ENCODE measurements at regions of chr19 and their contacts with region 1.

Region 1: DNA sequence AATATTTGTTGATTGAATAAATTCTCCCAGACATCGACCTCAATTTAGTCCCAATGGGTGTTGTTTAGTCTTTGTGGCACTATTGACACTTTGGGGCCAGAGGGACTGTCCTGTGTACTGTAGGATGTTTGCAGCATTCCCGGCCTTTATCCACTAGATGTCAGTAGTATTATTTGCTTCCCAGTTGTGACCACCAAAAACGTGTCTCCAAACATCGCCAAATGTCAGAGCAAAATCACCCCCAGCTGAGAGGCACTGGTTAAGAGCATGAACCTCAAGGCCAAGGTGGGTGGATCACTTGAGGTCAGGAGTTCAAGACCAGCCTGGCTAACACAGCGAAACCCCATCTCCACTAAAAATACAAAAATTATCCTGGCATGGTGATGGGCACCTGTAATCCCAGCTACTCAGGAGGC is 15.4 kb downstream of the NLRP12 start:
- DNase-seq: peak; percentile 47
- H3K4me3 ChIP-seq: no peak overlapping the region
- H3K27ac ChIP-seq: no peak overlapping the region
- H3K4me1 ChIP-seq: peaks cover 10% of the 10 kb centered on the region
- H3K27me3 ChIP-seq: no peaks in the 10 kb centered on the region
- CTCF ChIP-seq: peak; percentile 51 to 59
- POLR2A ChIP-seq: no peak

Region 2: GRCh38 chr19:53945441-53945840 is 136.7 kb after region 1 on chr19:
- CTCF ChIA-PET with region 1: interaction called, 11 read pairs
- POLR2A ChIA-PET with region 1: no interaction called
- dilution Hi-C with region 1: no loop called
- intact Hi-C with region 1: no loop called
- DNase-seq: no peak
- H3K4me3 ChIP-seq: no peak overlapping the region
- H3K27ac ChIP-seq: no peak overlapping the region
- H3K4me1 ChIP-seq: no peaks in the 10 kb centered on the region
- H3K27me3 ChIP-seq: peaks cover 11 to 30% of the 10 kb centered on the region in 2 experiments
- CTCF ChIP-seq: no peak
- POLR2A ChIP-seq: no peak

Region 3: GRCh38 chr19:54035215-54036178 is 226.8 kb after region 1 on chr19:
- CTCF ChIA-PET with region 1: interaction called, 210 read pairs
- POLR2A ChIA-PET with region 1: no interaction called
- dilution Hi-C with region 1: no loop called
- intact Hi-C with region 1: loop called (anchors 1 kb)
- DNase-seq: peak; percentile 86
- H3K4me3 ChIP-seq: no peak overlapping the region
- H3K27ac ChIP-seq: peak overlapping the region; percentile 68
- H3K4me1 ChIP-seq: peaks cover 16% of the 10 kb centered on the region
- H3K27me3 ChIP-seq: no peaks in the 10 kb centered on the region
- CTCF ChIP-seq: no peak
- POLR2A ChIP-seq: no peak

Region 4: GRCh38 chr19:54096617-54097129 is 288.0 kb after region 1 on chr19:
- CTCF ChIA-PET with region 1: interaction called, 9 read pairs
- POLR2A ChIA-PET with region 1: no interaction called
- dilution Hi-C with region 1: no loop called
- intact Hi-C with region 1: loop called (anchors 1 kb)
- DNase-seq: no peak
- H3K4me3 ChIP-seq: no peak overlapping the region
- H3K27ac ChIP-seq: no peak overlapping the region
- H3K4me1 ChIP-seq: no peaks in the 10 kb centered on the region
- H3K27me3 ChIP-seq: no peaks in the 10 kb centered on the region
- CTCF ChIP-seq: peak in 1 of 2 donors; percentile 15
- POLR2A ChIP-seq: no peak

Region 5: GRCh38 chr19:54231077-54231931 is 422.6 kb after region 1 on chr19:
- CTCF ChIA-PET with region 1: interaction called, 3 read pairs
- POLR2A ChIA-PET with region 1: no interaction called
- dilution Hi-C with region 1: no loop called
- intact Hi-C with region 1: loop called (anchors 1 kb)
- DNase-seq: peak; percentile 74
- H3K4me3 ChIP-seq: no peak overlapping the region
- H3K27ac ChIP-seq: no peak overlapping the region
- H3K4me1 ChIP-seq: no peaks in the 10 kb centered on the region
- H3K27me3 ChIP-seq: peaks cover 10 to 17% of the 10 kb centered on the region in 2 experiments
- CTCF ChIP-seq: peak; percentile 96 to 100
- POLR2A ChIP-seq: no peak

Measured in endothelial cell of umbilical vein (primary cell).